GM12878 (cell line): ENCODE measurements at regions of chr11 and their contacts with region 1.

Region 1: GRCh38 chr11:65454696-65455456 is 32.3 kb downstream of the NEAT1 start:
- DNase-seq: peak; percentile 77
- ATAC-seq: peak; percentile 82
- H3K4me3 ChIP-seq: peak overlapping the region; percentile 80
- H3K27ac ChIP-seq: peak overlapping the region; percentile 93
- H3K4me1 ChIP-seq: peaks cover 25% of the 10 kb centered on the region
- H3K27me3 ChIP-seq: no peaks in the 10 kb centered on the region
- CTCF ChIP-seq: peak; percentile 12 to 40 (median 17); a peak in 4 of 6 replicates
- EP300 ChIP-seq: 0 out of 4 replicates have a peak, but pooled peaks of 1 of the 2 experiments have one; percentile 23
- POLR2A ChIP-seq: peak; percentile 99
- RAD21 ChIP-seq: 0 out of 2 replicates have a peak, but pooled peaks have one; percentile 5

Region 2: DNA sequence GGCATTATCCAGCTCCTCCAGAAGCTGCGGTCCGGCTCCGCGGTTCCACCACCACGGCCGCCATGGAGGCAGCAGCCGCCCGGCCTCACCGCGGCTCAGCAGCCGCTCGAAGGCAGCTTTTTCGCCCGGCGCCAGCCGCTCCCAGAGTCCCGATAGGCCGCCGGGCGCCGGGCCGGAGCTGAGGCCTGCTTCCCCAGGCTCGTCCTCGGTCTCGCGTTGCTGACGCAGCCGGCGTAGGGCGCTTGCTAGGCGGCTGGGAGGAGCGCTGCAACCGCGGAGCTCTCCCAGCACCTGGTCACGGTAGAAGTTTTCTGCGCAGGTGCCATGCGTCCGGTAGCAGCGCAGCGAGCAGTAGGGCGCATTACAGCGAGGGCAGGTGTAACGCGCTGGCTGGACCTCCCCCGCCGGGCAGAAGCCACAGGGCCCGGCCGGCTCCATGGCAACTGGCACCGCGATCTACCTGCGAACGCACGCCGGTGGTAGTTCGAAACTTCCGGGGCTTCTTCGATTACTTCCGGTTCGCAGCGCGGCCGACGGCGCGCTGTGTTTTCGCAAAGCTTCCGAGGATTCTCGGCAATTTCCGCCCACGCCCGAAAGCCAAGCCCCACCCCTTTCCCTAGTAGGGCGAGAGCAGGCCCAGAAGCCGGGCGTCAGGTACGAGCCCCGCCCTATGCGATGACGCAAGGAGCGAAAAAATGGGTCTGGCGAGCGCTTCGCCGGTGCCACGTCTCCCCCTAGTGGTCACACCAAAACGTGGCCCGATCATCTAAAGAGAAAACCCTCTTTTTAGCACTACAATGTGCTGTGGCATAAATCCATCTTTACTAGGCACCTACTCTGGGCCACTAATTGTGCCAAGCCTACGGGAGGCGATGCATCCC is 337.4 kb before region 1 on chr11 and contains the start of gene ZNHIT2:
- CTCF ChIA-PET with region 1: no interaction called
- POLR2A ChIA-PET with region 1: no interaction called
- RAD21 ChIA-PET with region 1: no interaction called
- SMC1A ChIA-PET with region 1: no interaction called
- in situ Hi-C with region 1: no loop called
- intact Hi-C with region 1: no loop called
- DNase-seq: peak; percentile 97
- ATAC-seq: peak; percentile 75
- H3K4me3 ChIP-seq: peak within 1 kb of the TSS; percentile 76
- H3K27ac ChIP-seq: peak within 1 kb of the TSS; percentile 68
- H3K4me1 ChIP-seq: peaks cover 29% of the 10 kb centered on the region
- H3K27me3 ChIP-seq: no peaks in the 10 kb centered on the region
- CTCF ChIP-seq: peak; percentile 85 to 97 (median 93); a peak in 5 of 6 replicates
- EP300 ChIP-seq: no peak
- POLR2A ChIP-seq: peak; percentile 95
- RAD21 ChIP-seq: peak; percentile 78
- polyA plus RNA-seq, gene ZNHIT2: 0.40 TPM in 1 of 2 experiments, not detected in the other

Region 3: GRCh38 chr11:65440831-65441499 is 13.9 kb before region 1 on chr11:
- CTCF ChIA-PET with region 1: interaction called, 4 read pairs
- POLR2A ChIA-PET with region 1: interaction called, 12 read pairs
- RAD21 ChIA-PET with region 1: interaction called, 9 read pairs
- SMC1A ChIA-PET with region 1: interaction called, 5 read pairs
- in situ Hi-C with region 1: no loop called
- intact Hi-C with region 1: no loop called
- DNase-seq: peak; percentile 98
- ATAC-seq: peak; percentile 69
- H3K4me3 ChIP-seq: no peak overlapping the region
- H3K27ac ChIP-seq: peak overlapping the region; percentile 89
- H3K4me1 ChIP-seq: peaks cover 52% of the 10 kb centered on the region
- H3K27me3 ChIP-seq: no peaks in the 10 kb centered on the region
- CTCF ChIP-seq: no peak
- EP300 ChIP-seq: peak; percentile 81 to 84; a peak in 3 of 4 replicates
- POLR2A ChIP-seq: peak; percentile 47; the same call in 1 of the 2 replicates
- RAD21 ChIP-seq: no peak

Region 4: DNA sequence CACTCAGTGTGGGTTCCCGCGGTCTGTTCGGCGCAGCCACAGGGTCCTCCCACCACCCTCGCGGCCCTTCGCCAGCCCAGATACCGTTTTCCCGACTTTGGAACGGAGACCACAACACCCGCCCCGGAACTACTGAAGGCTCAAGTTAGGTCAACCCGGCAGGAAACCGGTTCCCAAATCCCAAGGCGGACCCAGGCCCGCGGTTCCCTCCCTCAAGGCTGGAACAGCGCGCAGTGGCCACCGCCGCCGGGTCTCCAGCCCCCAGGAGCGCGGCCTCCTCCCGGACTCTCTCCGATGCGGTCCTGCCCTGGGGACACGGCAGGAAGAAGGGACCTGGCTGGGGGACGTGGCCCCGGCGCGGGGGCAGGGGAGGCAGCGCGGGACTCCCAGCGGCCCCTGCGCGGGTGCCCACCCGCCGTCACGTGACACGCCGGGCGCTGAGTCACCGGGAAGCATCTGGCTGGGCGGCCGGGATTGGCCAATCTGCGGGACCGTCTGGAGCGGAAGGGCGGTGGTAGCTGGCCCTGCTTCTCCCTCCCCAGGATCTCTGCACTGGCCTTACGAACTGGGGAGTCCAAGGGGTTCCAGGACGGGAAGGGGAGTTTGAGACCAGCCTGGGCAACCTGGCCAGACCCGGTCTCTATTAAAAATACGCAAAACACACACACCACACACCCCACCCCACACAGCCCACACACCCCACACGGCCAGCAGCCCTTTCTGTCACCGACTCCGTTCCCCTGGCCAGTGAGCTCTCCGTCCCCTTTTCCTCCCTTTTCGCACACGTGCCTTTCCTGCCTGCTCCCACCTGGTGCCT is 22.5 kb after region 1 on chr11:
- CTCF ChIA-PET with region 1: interaction called, 4 read pairs
- POLR2A ChIA-PET with region 1: interaction called, 23 read pairs
- RAD21 ChIA-PET with region 1: interaction called, 4 read pairs
- SMC1A ChIA-PET with region 1: interaction called, 9 read pairs
- in situ Hi-C with region 1: no loop called
- intact Hi-C with region 1: no loop called
- DNase-seq: no peak
- ATAC-seq: peak; percentile 88
- H3K4me3 ChIP-seq: peak overlapping the region; percentile 79
- H3K27ac ChIP-seq: peak overlapping the region; percentile 100
- H3K4me1 ChIP-seq: peaks cover 26% of the 10 kb centered on the region
- H3K27me3 ChIP-seq: no peaks in the 10 kb centered on the region
- CTCF ChIP-seq: no peak
- EP300 ChIP-seq: 0 out of 4 replicates have a peak, but pooled peaks of 1 of the 2 experiments have one; percentile 26
- POLR2A ChIP-seq: peak; percentile 91
- RAD21 ChIP-seq: no peak

Region 5: DNA sequence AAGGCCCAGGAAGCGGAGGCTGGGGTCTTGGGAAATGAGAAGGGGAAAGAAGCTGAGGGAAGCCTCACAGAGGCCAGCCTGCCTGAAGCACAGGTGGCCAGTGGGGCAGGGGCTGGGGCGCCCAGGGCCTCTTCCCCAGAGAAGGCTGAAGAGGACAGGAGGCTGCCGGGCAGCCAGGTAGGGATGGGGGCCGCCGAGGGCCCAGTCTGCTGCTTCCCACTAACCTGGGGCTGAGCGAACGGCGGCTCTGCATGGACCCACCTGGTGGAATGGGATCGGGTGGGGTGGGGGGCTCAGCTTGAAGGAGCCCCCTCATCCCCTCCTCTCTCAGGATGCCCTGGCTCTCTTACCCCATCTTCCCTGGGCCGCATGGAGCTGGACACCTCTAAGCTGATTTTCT is 128.7 kb after region 1 on chr11:
- CTCF ChIA-PET with region 1: no interaction called
- POLR2A ChIA-PET with region 1: no interaction called
- RAD21 ChIA-PET with region 1: no interaction called
- SMC1A ChIA-PET with region 1: no interaction called
- in situ Hi-C with region 1: no loop called
- intact Hi-C with region 1: no loop called
- DNase-seq: no peak
- ATAC-seq: no peak
- H3K4me3 ChIP-seq: no peak overlapping the region
- H3K27ac ChIP-seq: no peak overlapping the region
- H3K4me1 ChIP-seq: peaks cover 33% of the 10 kb centered on the region
- H3K27me3 ChIP-seq: no peaks in the 10 kb centered on the region
- CTCF ChIP-seq: no peak
- EP300 ChIP-seq: no peak
- POLR2A ChIP-seq: no peak
- RAD21 ChIP-seq: no peak

Region 6: DNA sequence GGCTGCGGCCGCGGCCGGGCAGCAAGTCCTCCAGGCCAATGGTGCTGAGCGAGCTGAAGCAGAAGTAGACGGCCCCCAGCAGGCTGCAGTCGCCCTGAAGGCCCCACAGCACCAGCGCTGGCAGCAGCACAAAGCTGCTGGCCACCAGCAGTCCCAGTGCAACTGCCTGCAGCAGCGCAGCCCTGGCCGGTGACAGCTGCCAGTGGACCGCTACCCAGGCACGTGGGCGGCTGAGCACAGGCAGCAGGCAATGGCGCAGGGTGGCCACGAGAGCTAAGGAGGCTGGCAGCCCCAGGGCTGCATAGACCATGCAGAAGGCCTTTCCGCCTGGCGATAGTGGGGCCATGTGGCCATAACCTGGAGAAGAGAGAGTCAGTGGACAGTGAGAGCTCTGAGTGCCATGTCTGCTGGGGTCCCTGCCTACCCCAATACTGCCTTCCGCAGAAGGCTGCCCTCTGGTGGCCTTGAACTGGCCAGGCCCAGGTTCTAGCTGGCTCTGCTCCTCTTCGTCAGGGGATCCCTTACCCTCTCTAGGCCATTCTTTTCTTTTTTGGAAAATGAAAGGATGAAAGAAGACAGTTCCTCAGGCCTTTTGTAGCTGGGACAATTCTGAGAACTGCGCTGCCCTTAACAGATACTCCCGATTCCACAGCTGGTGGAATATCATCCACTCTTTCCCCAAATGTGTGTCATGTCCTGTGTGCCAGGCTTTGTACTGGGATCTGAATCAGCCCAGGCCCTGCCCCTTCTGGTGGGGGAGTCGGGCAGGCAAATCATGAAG is 138.8 kb after region 1 on chr11:
- CTCF ChIA-PET with region 1: no interaction called
- POLR2A ChIA-PET with region 1: no interaction called
- RAD21 ChIA-PET with region 1: no interaction called
- SMC1A ChIA-PET with region 1: no interaction called
- in situ Hi-C with region 1: no loop called
- intact Hi-C with region 1: no loop called
- DNase-seq: no peak
- ATAC-seq: peak; percentile 68
- H3K4me3 ChIP-seq: no peak overlapping the region
- H3K27ac ChIP-seq: no peak overlapping the region
- H3K4me1 ChIP-seq: peaks cover 11% of the 10 kb centered on the region
- H3K27me3 ChIP-seq: no peaks in the 10 kb centered on the region
- CTCF ChIP-seq: peak; percentile 62 to 71 (median 63)
- EP300 ChIP-seq: no peak
- POLR2A ChIP-seq: peak; percentile 48
- RAD21 ChIP-seq: peak; percentile 44